CD8-positive, alpha-beta T cell (primary cell): ENCODE measurements at regions of chr5 and their contacts with region 1.

Region 1: GRCh38 chr5:6745706-6746222 is 32.5 kb downstream of the TENT4A start:
- DNase-seq: peak in 4 of 9 experiments; percentile 26 to 71 (median 46)
- ATAC-seq: peak; percentile 75
- H3K4me3 ChIP-seq: no peak overlapping the region
- H3K4me3 Mint-ChIP-seq: no peak overlapping the region
- H3K27ac ChIP-seq: no peak overlapping the region
- H3K27ac Mint-ChIP-seq: no peak overlapping the region
- H3K4me1 ChIP-seq: no peaks in the 10 kb centered on the region
- H3K4me1 Mint-ChIP-seq: peaks cover 3% of the 10 kb centered on the region
- H3K27me3 ChIP-seq: no peaks in the 10 kb centered on the region
- H3K27me3 Mint-ChIP-seq: no peaks in the 10 kb centered on the region
- CTCF ChIP-seq: peak; percentile 94

Region 2: GRCh38 chr5:5492087-5492933 is 1253.5 kb before region 1 on chr5:
- CTCF ChIA-PET with region 1: interaction called, 3 read pairs
- POLR2A ChIA-PET with region 1: no interaction called
- intact Hi-C with region 1: loop called (anchors 1 kb)
- DNase-seq: peak in 7 of 9 experiments; percentile 4 to 78 (median 38)
- ATAC-seq: peak; percentile 35
- H3K4me3 ChIP-seq: no peak overlapping the region
- H3K4me3 Mint-ChIP-seq: peak overlapping the region; percentile 66
- H3K27ac ChIP-seq: no peak overlapping the region
- H3K27ac Mint-ChIP-seq: no peak overlapping the region
- H3K4me1 ChIP-seq: peaks cover 17% of the 10 kb centered on the region
- H3K4me1 Mint-ChIP-seq: peaks cover 21% of the 10 kb centered on the region
- H3K27me3 ChIP-seq: no peaks in the 10 kb centered on the region
- H3K27me3 Mint-ChIP-seq: no peaks in the 10 kb centered on the region
- CTCF ChIP-seq: peak; percentile 81

Region 3: GRCh38 chr5:6291961-6292360 is 453.8 kb before region 1 on chr5:
- CTCF ChIA-PET with region 1: no interaction called
- POLR2A ChIA-PET with region 1: no interaction called
- intact Hi-C with region 1: loop called (anchors 1 to 2 kb)
- DNase-seq: peak in 2 of 9 experiments; percentile 21 to 38
- ATAC-seq: no peak
- H3K4me3 ChIP-seq: no peak overlapping the region
- H3K4me3 Mint-ChIP-seq: no peak overlapping the region
- H3K27ac ChIP-seq: no peak overlapping the region
- H3K27ac Mint-ChIP-seq: no peak overlapping the region
- H3K4me1 ChIP-seq: no peaks in the 10 kb centered on the region
- H3K4me1 Mint-ChIP-seq: peaks cover 2% of the 10 kb centered on the region
- H3K27me3 ChIP-seq: no peaks in the 10 kb centered on the region
- H3K27me3 Mint-ChIP-seq: peaks cover 3% of the 10 kb centered on the region
- CTCF ChIP-seq: no peak

Region 4: GRCh38 chr5:6615034-6615815 is 130.5 kb before region 1 on chr5:
- CTCF ChIA-PET with region 1: interaction called, 11 read pairs
- POLR2A ChIA-PET with region 1: no interaction called
- intact Hi-C with region 1: loop called in 1 of 2 experiments (anchors 1 kb)
- DNase-seq: no peak
- ATAC-seq: no peak
- H3K4me3 ChIP-seq: no peak overlapping the region
- H3K4me3 Mint-ChIP-seq: no peak overlapping the region
- H3K27ac ChIP-seq: no peak overlapping the region
- H3K27ac Mint-ChIP-seq: no peak overlapping the region
- H3K4me1 ChIP-seq: no peaks in the 10 kb centered on the region
- H3K4me1 Mint-ChIP-seq: peaks cover 38% of the 10 kb centered on the region
- H3K27me3 ChIP-seq: no peaks in the 10 kb centered on the region
- H3K27me3 Mint-ChIP-seq: no peaks in the 10 kb centered on the region
- CTCF ChIP-seq: no peak

Region 5: GRCh38 chr5:6712577-6713275 is 33.0 kb before region 1 on chr5:
- CTCF ChIA-PET with region 1: no interaction called
- POLR2A ChIA-PET with region 1: interaction called, 7 read pairs
- intact Hi-C with region 1: loop called in 1 of 2 experiments (anchors 2 kb)
- DNase-seq: peak in 8 of 9 experiments; percentile 95 to 99 (median 96)
- ATAC-seq: peak; percentile 76
- H3K4me3 ChIP-seq: peak overlapping the region; percentile 83 to 91
- H3K4me3 Mint-ChIP-seq: peak overlapping the region; percentile 89
- H3K27ac ChIP-seq: peak overlapping the region; percentile 77 to 86
- H3K27ac Mint-ChIP-seq: peak overlapping the region; percentile 92
- H3K4me1 ChIP-seq: peaks cover 28% of the 10 kb centered on the region
- H3K4me1 Mint-ChIP-seq: peaks cover 39% of the 10 kb centered on the region
- H3K27me3 ChIP-seq: peaks cover 0 to 2% of the 10 kb centered on the region in 2 experiments
- H3K27me3 Mint-ChIP-seq: no peaks in the 10 kb centered on the region
- CTCF ChIP-seq: no peak